ENCODE measurements at regions of chr17 and their contacts with region 1.

Region 1: GRCh38 chr17:5592382-5592781 is 8.1 kb upstream of the NLRP1 start:
- DNase-seq: no peak
- ATAC-seq: peak; percentile 68

Region 2: GRCh38 chr17:5472511-5472910 is 119.9 kb before region 1 on chr17:
- intact Hi-C with region 1: no loop called
- DNase-seq: no peak
- ATAC-seq: no peak

Region 3: GRCh38 chr17:5711344-5711743 is 119.0 kb after region 1 on chr17:
- intact Hi-C with region 1: loop called (anchors 5 kb)
- DNase-seq: no peak
- ATAC-seq: no peak

Region 4: GRCh38 chr17:6045621-6046357 is 453.4 kb after region 1 on chr17:
- intact Hi-C with region 1: loop called (anchors 5 kb)
- DNase-seq: no peak
- ATAC-seq: no peak

Measured in Right ventricle myocardium superior (tissue), 1 donor.